ENCODE measurements at regions of chr4 and their contacts with region 1.

Region 1: GRCh38 chr4:83252782-83253405 is 31.7 kb downstream of the COQ2 start:
- DNase-seq: peak; percentile 36 to 81 (median 72)
- H3K4me3 ChIP-seq: no peak overlapping the region
- H3K27ac ChIP-seq: no peak overlapping the region
- H3K4me1 ChIP-seq: peaks cover 11 to 18% of the 10 kb centered on the region in 2 donors
- H3K27me3 ChIP-seq: no peaks in the 10 kb centered on the region
- CTCF ChIP-seq: peak; percentile 51 to 67 (median 59)
- POLR2A ChIP-seq: no peak

Region 2: DNA sequence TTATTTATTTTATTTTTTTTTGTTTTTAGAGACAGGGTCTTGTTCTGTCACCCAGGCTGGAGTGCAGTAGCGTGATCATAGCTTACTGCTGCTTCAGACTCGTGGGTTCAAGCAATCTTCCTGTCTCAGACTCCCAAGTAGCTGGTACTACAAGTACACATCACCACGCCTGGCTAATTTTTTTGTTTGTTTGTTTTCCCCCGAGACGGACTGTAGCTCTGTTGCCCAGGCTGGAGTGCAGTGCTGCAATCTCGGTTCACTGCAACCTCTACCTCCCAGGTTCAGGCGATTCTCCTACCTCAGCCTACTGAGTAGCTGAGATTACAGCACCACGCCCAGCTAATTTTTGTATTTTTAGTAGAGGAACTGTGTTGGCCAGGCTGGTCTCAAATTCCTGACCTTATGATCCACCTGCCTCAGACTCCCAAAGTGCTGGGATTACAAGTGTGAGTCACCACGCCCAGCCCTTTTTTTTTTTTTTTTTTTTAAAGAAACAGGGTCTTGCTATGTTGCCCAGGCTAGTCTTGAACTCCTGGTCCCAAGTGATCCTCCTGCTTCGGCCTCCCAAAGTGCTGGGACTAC is 185.7 kb before region 1 on chr4:
- intact Hi-C with region 1: loop called in 1 of 2 experiments (anchors 5 kb)
- DNase-seq: no peak
- H3K4me3 ChIP-seq: no peak overlapping the region
- H3K27ac ChIP-seq: no peak overlapping the region
- H3K4me1 ChIP-seq: no peaks in the 10 kb centered on the region
- H3K27me3 ChIP-seq: no peaks in the 10 kb centered on the region
- CTCF ChIP-seq: no peak
- POLR2A ChIP-seq: no peak

Region 3: GRCh38 chr4:83083925-83084475 is 168.9 kb before region 1 on chr4:
- intact Hi-C with region 1: loop called in 1 of 2 experiments (anchors 10 kb)
- DNase-seq: peak in 1 of 7 donors; percentile 28
- H3K4me3 ChIP-seq: no peak overlapping the region
- H3K27ac ChIP-seq: no peak overlapping the region
- H3K4me1 ChIP-seq: no peaks in the 10 kb centered on the region
- H3K27me3 ChIP-seq: no peaks in the 10 kb centered on the region
- CTCF ChIP-seq: no peak
- POLR2A ChIP-seq: no peak

Measured in adrenal gland (tissue), 19 donors.